Activated B cell treated with CpG ODN at 0.5 μM for 24 hours (primary cell): ENCODE measurements at regions of chr11 and their contacts with region 1.

Region 1: DNA sequence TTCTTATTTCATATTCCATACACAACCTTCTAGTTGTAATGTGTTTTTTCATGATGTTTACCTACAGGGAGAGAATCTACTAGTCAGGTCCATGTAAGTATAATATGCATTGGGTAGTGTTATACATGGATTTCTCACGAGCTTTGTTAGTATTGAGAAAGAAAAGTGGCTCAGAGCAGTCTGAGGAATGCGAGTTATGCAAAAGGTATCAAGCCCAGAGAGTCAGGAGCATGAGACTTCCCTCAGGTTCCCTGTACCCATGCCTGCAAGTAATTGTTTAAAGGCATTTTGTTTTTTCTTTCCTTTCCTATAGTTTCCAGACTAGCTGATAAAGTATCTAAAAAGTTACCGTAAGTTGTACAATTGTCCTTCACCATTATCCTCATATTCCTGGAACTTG is 66.1 kb downstream of the STK33 start:
- DNase-seq: no peak
- ATAC-seq: no peak
- H3K4me3 Mint-ChIP-seq: no peak overlapping the region
- H3K27ac Mint-ChIP-seq: no peak overlapping the region
- H3K4me1 Mint-ChIP-seq: peaks cover 38% of the 10 kb centered on the region
- H3K27me3 Mint-ChIP-seq: no peaks in the 10 kb centered on the region
- CTCF ChIP-seq: no peak

Region 2: DNA sequence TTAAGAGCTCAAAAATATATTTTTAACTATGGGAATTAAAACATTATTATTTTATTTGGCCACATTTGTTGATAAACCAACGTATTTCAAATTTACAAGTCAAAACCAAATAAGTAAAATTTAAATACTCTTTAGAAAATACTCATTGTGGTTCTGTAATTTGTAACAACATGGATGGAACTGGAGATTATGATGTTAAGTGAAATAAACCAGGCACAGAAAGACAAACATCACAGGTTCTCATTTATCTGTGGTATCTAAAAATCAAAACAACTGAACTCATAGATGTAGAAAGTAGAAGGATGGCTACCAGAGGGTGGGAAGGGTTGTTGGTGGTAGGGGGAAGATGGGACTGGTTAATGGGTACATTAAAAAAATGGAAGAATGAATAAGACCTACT is 15.3 kb after region 1 on chr11:
- CTCF ChIA-PET with region 1: no interaction called
- POLR2A ChIA-PET with region 1: no interaction called
- intact Hi-C with region 1: loop called (anchors 2 kb)
- DNase-seq: no peak
- ATAC-seq: no peak
- H3K4me3 Mint-ChIP-seq: no peak overlapping the region
- H3K27ac Mint-ChIP-seq: no peak overlapping the region
- H3K4me1 Mint-ChIP-seq: no peaks in the 10 kb centered on the region
- H3K27me3 Mint-ChIP-seq: no peaks in the 10 kb centered on the region
- CTCF ChIP-seq: no peak